Activated CD4-positive, alpha-beta T cell treated with anti-CD3 and anti-CD28 coated beads for 36 hours (primary cell): ENCODE measurements at regions of chr12 and their contacts with region 1.

Region 1: DNA sequence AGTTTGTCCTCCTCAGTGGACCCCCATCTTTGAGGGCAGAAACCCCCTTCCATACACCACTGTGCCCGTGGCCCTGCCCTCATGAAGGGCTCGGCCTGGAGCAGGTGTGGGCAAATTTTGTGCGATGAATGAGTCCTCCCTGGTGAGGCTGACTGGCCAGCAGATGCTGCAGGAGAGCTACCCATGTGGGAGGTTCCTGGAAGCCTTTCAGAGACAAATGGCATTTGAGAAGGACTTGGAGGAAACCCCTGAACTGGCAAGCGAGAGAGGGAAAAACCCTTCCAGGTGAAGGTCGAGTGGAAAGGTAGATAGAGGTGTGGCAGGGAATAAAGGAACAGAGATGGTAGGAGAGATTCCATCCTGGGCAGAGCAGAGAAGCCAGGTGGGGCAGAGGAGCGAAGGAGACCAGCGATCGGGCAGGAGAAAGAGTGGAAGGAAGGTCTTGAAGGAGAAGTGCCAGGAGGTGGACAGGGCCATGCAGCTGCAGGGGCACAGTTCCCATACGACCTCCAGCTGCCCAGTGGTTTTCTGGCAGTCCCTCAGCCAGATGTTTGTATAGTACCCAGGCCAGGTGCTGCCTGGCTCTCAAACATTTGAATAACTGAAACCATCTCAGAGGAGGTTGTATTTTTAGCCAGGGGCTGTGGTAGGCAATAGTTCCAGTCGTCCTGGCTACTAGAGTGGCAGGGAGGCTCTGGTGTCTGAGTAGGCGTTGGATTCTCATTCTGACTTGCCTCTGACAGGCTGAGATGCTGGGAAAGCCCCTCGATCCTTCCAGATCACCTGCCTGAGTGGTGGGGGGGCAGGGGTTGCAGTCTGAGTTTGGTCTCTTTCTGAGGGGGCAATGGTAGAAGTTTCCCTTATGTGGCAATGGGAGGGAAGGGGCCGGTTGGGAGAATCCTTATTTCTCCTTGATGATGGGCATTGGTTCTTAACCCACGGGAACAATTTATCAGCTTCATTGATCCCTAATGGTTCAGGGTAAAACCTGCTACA is 40.1 kb downstream of the FBXL14 start:
- DNase-seq: peak; percentile 80
- ATAC-seq: peak; percentile 95
- H3K4me3 Mint-ChIP-seq: no peak overlapping the region
- H3K27ac Mint-ChIP-seq: no peak overlapping the region
- H3K4me1 Mint-ChIP-seq: peaks cover 15% of the 10 kb centered on the region
- H3K27me3 Mint-ChIP-seq: peaks cover 6% of the 10 kb centered on the region

Region 2: GRCh38 chr12:1533602-1534304 is 20.5 kb before region 1 on chr12:
- CTCF ChIA-PET with region 1: no interaction called
- POLR2A ChIA-PET with region 1: no interaction called
- intact Hi-C with region 1: loop called in 1 of 2 experiments (anchors 1 kb)
- DNase-seq: peak; percentile 77
- ATAC-seq: peak; percentile 85
- H3K4me3 Mint-ChIP-seq: peak overlapping the region; percentile 50
- H3K27ac Mint-ChIP-seq: no peak overlapping the region
- H3K4me1 Mint-ChIP-seq: peaks cover 32% of the 10 kb centered on the region
- H3K27me3 Mint-ChIP-seq: peaks cover 60% of the 10 kb centered on the region